T-cell (primary cell): ENCODE measurements at regions of chr6 and their contacts with region 1.

Region 1: GRCh38 chr6:86526238-86526637 is 411.1 kb upstream of the HTR1E start:
- DNase-seq: no peak
- ATAC-seq: no peak
- H3K4me3 ChIP-seq: no peak overlapping the region
- H3K4me3 Mint-ChIP-seq: no peak overlapping the region
- H3K27ac ChIP-seq: no peak overlapping the region
- H3K27ac Mint-ChIP-seq: no peak overlapping the region
- H3K4me1 ChIP-seq: no peaks in the 10 kb centered on the region
- H3K4me1 Mint-ChIP-seq: no peaks in the 10 kb centered on the region
- H3K27me3 ChIP-seq: no peaks in the 10 kb centered on the region
- H3K27me3 Mint-ChIP-seq: no peaks in the 10 kb centered on the region

Region 2: DNA sequence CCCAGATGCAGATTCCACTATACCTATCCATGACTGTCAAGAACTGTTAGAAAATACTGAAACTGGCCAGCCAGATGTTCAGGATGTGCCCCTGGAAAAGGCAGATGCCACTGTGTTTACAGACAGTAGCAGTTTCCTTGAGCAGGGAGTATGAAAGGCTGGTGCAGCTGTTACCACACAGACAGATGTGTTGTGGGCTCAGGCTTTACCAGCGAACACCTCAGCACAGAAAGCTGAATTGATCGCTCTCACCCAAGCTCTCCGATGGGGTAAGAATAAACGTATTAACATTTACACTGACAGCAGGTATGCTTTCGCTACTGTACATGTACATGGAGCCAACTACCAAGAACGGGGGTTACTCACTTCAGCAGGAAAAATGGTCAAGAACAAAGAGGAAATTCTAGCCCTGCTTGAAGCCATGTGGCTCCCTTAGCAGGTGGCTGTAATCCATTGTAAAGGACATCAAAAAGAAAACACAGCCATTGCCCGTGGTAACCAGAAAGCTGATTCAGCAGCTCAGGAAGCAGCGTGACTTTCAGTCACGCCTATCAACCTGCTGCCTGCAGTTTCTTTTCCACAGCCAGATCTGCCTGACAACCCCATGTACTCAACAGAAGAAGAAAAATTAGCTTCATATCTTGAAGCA is 48.6 kb before region 1 on chr6:
- CTCF ChIA-PET with region 1: no interaction called
- POLR2A ChIA-PET with region 1: no interaction called
- DNase-seq: no peak
- ATAC-seq: no peak
- H3K4me3 ChIP-seq: no peak overlapping the region
- H3K4me3 Mint-ChIP-seq: no peak overlapping the region
- H3K27ac ChIP-seq: no peak overlapping the region
- H3K27ac Mint-ChIP-seq: no peak overlapping the region
- H3K4me1 ChIP-seq: no peaks in the 10 kb centered on the region
- H3K4me1 Mint-ChIP-seq: no peaks in the 10 kb centered on the region
- H3K27me3 ChIP-seq: no peaks in the 10 kb centered on the region
- H3K27me3 Mint-ChIP-seq: no peaks in the 10 kb centered on the region

Region 3: DNA sequence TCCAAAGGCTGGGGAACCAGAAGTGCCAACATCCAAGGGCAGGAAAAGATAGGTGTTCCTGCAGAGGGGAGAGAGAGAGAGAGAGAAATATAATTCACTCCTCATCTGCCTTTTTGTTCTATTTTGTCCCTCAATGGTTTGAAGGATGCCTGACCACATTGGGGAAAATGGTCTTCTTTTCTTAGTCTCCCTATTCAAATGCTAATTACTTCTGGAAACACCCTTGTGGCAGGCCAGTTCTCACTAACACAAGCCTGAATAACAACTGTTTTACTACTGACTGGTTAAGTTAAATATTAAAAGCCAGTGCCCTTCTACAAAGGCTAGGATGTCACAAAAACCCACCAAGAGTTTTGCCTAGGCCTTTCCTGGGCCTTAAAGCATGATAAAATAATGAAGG is 14.3 kb before region 1 on chr6:
- CTCF ChIA-PET with region 1: no interaction called
- POLR2A ChIA-PET with region 1: no interaction called
- DNase-seq: no peak
- ATAC-seq: no peak
- H3K4me3 ChIP-seq: no peak overlapping the region
- H3K4me3 Mint-ChIP-seq: no peak overlapping the region
- H3K27ac ChIP-seq: no peak overlapping the region
- H3K27ac Mint-ChIP-seq: no peak overlapping the region
- H3K4me1 ChIP-seq: no peaks in the 10 kb centered on the region
- H3K4me1 Mint-ChIP-seq: no peaks in the 10 kb centered on the region
- H3K27me3 ChIP-seq: no peaks in the 10 kb centered on the region
- H3K27me3 Mint-ChIP-seq: no peaks in the 10 kb centered on the region

Region 4: GRCh38 chr6:86586195-86586594 is 60.0 kb after region 1 on chr6:
- CTCF ChIA-PET with region 1: no interaction called
- POLR2A ChIA-PET with region 1: no interaction called
- DNase-seq: no peak
- ATAC-seq: no peak
- H3K4me3 ChIP-seq: no peak overlapping the region
- H3K4me3 Mint-ChIP-seq: no peak overlapping the region
- H3K27ac ChIP-seq: no peak overlapping the region
- H3K27ac Mint-ChIP-seq: no peak overlapping the region
- H3K4me1 ChIP-seq: no peaks in the 10 kb centered on the region
- H3K4me1 Mint-ChIP-seq: no peaks in the 10 kb centered on the region
- H3K27me3 ChIP-seq: no peaks in the 10 kb centered on the region
- H3K27me3 Mint-ChIP-seq: no peaks in the 10 kb centered on the region

Region 5: GRCh38 chr6:86615299-86615698 is 89.1 kb after region 1 on chr6:
- CTCF ChIA-PET with region 1: interaction called in 1 of 2 experiments, 4 read pairs
- POLR2A ChIA-PET with region 1: interaction called in 1 of 2 experiments, 16 read pairs
- DNase-seq: no peak
- ATAC-seq: no peak
- H3K4me3 ChIP-seq: no peak overlapping the region
- H3K4me3 Mint-ChIP-seq: no peak overlapping the region
- H3K27ac ChIP-seq: no peak overlapping the region
- H3K27ac Mint-ChIP-seq: no peak overlapping the region
- H3K4me1 ChIP-seq: no peaks in the 10 kb centered on the region
- H3K4me1 Mint-ChIP-seq: no peaks in the 10 kb centered on the region
- H3K27me3 ChIP-seq: no peaks in the 10 kb centered on the region
- H3K27me3 Mint-ChIP-seq: no peaks in the 10 kb centered on the region